ENCODE measurements at regions of chr2 and their contacts with region 1.

Region 1: DNA sequence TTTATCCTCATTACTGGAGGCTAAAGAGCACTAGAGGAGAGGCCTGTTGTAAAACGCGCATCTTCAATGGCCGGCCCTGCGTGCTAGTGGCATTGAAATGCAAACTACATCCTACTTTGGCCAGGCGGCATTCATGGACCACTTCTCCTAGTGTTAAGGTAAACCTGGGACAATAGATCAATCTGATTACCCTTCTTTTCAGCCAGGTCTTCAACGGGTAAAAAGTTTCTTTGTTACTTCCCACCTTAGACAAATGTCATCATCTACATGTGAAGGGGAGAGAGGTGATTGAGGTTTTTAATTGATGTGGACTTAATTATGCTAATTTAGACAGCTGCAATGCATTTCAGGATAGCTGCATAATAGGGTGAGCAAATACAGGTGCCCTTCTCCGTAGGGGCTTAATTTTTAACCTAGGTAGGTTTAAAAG is 628.0 kb downstream of the ZEB2 start:
- DNase-seq: no peak
- H3K4me3 ChIP-seq: no peak overlapping the region
- H3K27ac ChIP-seq: no peak overlapping the region
- H3K4me1 ChIP-seq: no peaks in the 10 kb centered on the region
- H3K27me3 ChIP-seq: no peaks in the 10 kb centered on the region
- CTCF ChIP-seq: no peak
- EP300 ChIP-seq: no peak
- POLR2A ChIP-seq: no peak

Region 2: GRCh38 chr2:143294068-143294467 is 597.8 kb before region 1 on chr2:
- intact Hi-C with region 1: loop called in 1 of 4 experiments (anchors 5 kb)
- DNase-seq: no peak
- H3K4me3 ChIP-seq: no peak overlapping the region
- H3K27ac ChIP-seq: no peak overlapping the region
- H3K4me1 ChIP-seq: no peaks in the 10 kb centered on the region
- H3K27me3 ChIP-seq: no peaks in the 10 kb centered on the region
- CTCF ChIP-seq: no peak
- EP300 ChIP-seq: no peak
- POLR2A ChIP-seq: no peak